B cell (primary cell): ENCODE measurements at regions of chr9 and their contacts with region 1.

Region 1: DNA sequence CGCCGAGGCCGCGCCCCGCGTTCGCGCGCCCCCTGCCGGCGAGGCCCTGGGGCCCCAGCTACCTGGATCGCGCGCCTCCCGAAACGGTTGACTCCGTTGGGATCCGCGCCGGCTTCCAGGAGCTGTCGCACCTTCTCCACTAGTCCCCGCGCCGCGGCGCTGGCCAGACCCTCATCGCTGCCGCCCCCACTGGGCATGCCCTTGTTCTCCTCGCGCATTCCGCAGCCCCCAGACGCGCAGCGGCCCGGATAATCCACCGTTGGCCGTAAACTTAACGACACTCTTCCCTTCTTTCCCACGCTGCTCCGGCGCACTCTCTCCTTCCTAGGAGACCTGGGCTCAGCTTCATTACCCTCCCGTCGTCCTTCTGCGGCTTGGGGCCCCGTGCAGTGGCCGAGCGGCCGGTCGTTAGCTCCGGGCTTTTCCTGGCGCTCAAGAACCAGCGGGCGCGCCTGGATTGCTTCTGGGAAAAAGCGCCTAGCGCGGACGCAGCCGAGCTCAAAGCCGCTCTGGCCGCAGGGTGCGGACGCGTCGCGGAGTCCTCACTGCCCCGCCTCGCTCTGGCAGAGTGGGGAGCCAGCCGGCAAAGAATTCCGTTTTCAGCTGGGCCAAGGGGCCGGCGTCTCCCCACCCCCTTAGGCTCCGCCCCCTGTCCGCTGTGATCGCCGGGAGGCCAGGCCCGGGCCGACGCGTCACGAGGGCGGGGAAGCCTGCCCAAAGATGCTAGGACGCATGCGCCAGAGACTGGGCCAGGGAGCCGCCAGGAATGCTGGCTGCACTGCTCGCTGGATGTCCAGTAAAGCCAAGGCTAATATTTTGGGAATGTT is at the start of gene CDKN2B:
- DNase-seq: peak; percentile 83
- ATAC-seq: peak; percentile 89
- H3K4me3 ChIP-seq: peak within 1 kb of the TSS; percentile 34 to 78 (median 69)
- H3K4me3 Mint-ChIP-seq: peak within 1 kb of the TSS; percentile 86
- H3K27ac ChIP-seq: peak within 1 kb of the TSS in 1 of 2 donors; percentile 9
- H3K27ac Mint-ChIP-seq: peak within 1 kb of the TSS; percentile 41
- H3K4me1 ChIP-seq: peaks cover 30 to 41% of the 10 kb centered on the region in 2 donors
- H3K4me1 Mint-ChIP-seq: peaks cover 34% of the 10 kb centered on the region
- H3K27me3 ChIP-seq: peaks cover 0 to 53% (median 45%) of the 10 kb centered on the region in 4 experiments
- H3K27me3 Mint-ChIP-seq: peaks cover 36% of the 10 kb centered on the region
- CTCF ChIP-seq: peak; percentile 98
- total RNA-seq, gene CDKN2B: 0.42 and 1.3 TPM in 2 replicates

Region 2: DNA sequence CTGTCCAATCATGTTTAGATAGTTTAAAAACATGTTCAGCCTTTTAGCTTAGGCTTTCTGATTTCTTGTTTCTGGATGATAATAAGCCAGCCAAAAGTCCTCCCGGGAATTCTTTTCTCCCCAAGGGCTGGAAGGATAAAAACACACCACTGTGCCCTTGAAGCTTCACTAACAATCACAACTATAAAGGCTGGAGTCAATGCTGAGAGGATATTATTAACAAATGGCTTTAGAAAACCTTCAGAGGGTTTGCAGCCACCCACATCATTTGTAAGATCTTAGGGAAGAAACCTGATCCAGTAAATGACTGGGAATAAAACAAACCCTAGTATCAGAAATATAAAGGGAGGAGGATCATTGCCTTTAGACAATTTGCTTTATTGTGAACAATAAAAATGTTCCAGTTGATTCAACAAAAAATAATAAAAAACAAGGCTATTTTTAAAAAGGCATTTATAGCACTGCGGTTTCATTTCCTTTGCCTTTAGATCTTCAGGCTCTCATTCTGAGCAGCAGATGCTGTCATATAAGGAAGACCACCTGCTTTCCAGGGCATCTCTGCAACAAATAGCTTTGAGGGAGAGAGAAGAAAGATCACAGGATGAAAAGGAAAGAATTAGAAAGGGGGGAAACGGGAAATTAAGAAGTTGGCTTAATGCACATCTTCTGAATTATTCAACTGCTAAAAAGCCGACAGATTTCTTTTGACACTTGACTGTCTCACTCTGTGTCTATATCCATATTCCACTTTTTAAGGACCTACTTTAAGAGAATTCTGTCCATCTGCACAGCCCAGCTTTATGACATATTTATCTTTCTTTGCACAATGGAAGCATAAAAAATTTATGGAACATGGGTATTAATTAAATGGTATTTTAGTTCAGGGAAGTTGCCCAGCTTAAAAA is 1942.9 kb before region 1 on chr9:
- CTCF ChIA-PET with region 1: no interaction called
- POLR2A ChIA-PET with region 1: no interaction called
- intact Hi-C with region 1: no loop called
- DNase-seq: no peak
- ATAC-seq: no peak
- H3K4me3 ChIP-seq: peak overlapping the region in 2 of 5 experiments; percentile 1 to 25
- H3K4me3 Mint-ChIP-seq: peak overlapping the region; percentile 48
- H3K27ac ChIP-seq: peak overlapping the region; percentile 63 to 85
- H3K27ac Mint-ChIP-seq: peak overlapping the region; percentile 85
- H3K4me1 ChIP-seq: peaks cover 28 to 30% of the 10 kb centered on the region in 2 donors
- H3K4me1 Mint-ChIP-seq: peaks cover 44% of the 10 kb centered on the region
- H3K27me3 ChIP-seq: no peaks in the 10 kb centered on the region
- H3K27me3 Mint-ChIP-seq: peaks cover 2% of the 10 kb centered on the region
- CTCF ChIP-seq: no peak

Region 3: GRCh38 chr9:21728781-21729180 is 280.2 kb before region 1 on chr9:
- CTCF ChIA-PET with region 1: no interaction called
- POLR2A ChIA-PET with region 1: no interaction called
- intact Hi-C with region 1: no loop called
- DNase-seq: no peak
- ATAC-seq: no peak
- H3K4me3 ChIP-seq: no peak overlapping the region
- H3K4me3 Mint-ChIP-seq: no peak overlapping the region
- H3K27ac ChIP-seq: no peak overlapping the region
- H3K27ac Mint-ChIP-seq: no peak overlapping the region
- H3K4me1 ChIP-seq: no peaks in the 10 kb centered on the region
- H3K4me1 Mint-ChIP-seq: no peaks in the 10 kb centered on the region
- H3K27me3 ChIP-seq: peaks cover 0 to 4% (median 1%) of the 10 kb centered on the region in 4 experiments
- H3K27me3 Mint-ChIP-seq: peaks cover 17% of the 10 kb centered on the region
- CTCF ChIP-seq: no peak

Region 4: DNA sequence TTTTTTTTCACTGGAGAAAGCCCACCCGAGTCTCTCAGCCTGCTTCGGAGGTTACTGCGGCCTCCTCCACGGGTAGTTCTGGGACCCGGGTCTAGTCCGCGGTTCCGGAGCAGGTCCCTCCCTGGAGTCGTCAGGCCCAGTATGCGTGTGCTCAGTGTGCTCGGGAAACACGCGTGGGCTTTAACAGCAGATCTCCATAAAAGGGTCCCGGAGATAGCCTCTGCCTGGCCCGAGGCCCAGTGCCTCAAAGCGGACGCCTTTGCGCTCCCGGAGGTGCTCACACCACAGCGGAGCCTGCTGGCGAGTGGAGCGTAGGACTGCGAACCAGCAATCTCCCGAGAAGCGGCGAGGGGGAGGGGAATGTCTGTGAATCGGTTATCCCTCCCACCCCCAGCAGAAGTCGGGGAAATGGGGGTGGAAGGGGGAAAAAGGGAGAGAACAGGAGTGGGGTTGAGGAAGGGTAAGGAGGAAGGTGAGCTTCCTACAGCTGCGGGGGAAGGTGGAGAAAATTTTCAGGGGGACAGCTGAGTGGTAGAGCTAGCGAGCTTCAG is 43.5 kb before region 1 on chr9:
- CTCF ChIA-PET with region 1: interaction called, 43 read pairs
- POLR2A ChIA-PET with region 1: no interaction called
- intact Hi-C with region 1: no loop called
- DNase-seq: peak; percentile 72
- ATAC-seq: peak; percentile 65
- H3K4me3 ChIP-seq: peak overlapping the region in 4 of 5 experiments; percentile 14 to 49 (median 27)
- H3K4me3 Mint-ChIP-seq: peak overlapping the region; percentile 76
- H3K27ac ChIP-seq: no peak overlapping the region
- H3K27ac Mint-ChIP-seq: no peak overlapping the region
- H3K4me1 ChIP-seq: peaks cover 17 to 34% of the 10 kb centered on the region in 2 donors
- H3K4me1 Mint-ChIP-seq: peaks cover 21% of the 10 kb centered on the region
- H3K27me3 ChIP-seq: peaks cover 0 to 83% (median 77%) of the 10 kb centered on the region in 4 experiments
- H3K27me3 Mint-ChIP-seq: peaks cover 89% of the 10 kb centered on the region
- CTCF ChIP-seq: peak; percentile 24

Region 5: GRCh38 chr9:21985964-21986667 is 22.8 kb before region 1 on chr9:
- CTCF ChIA-PET with region 1: interaction called, 25 read pairs
- POLR2A ChIA-PET with region 1: no interaction called
- intact Hi-C with region 1: loop called (anchors 2 kb)
- DNase-seq: no peak
- ATAC-seq: no peak
- H3K4me3 ChIP-seq: no peak overlapping the region
- H3K4me3 Mint-ChIP-seq: no peak overlapping the region
- H3K27ac ChIP-seq: no peak overlapping the region
- H3K27ac Mint-ChIP-seq: no peak overlapping the region
- H3K4me1 ChIP-seq: peaks cover 0 to 16% of the 10 kb centered on the region in 2 donors
- H3K4me1 Mint-ChIP-seq: peaks cover 9% of the 10 kb centered on the region
- H3K27me3 ChIP-seq: peaks cover 3 to 66% (median 25%) of the 10 kb centered on the region in 4 experiments
- H3K27me3 Mint-ChIP-seq: peaks cover 52% of the 10 kb centered on the region
- CTCF ChIP-seq: no peak

Region 6: DNA sequence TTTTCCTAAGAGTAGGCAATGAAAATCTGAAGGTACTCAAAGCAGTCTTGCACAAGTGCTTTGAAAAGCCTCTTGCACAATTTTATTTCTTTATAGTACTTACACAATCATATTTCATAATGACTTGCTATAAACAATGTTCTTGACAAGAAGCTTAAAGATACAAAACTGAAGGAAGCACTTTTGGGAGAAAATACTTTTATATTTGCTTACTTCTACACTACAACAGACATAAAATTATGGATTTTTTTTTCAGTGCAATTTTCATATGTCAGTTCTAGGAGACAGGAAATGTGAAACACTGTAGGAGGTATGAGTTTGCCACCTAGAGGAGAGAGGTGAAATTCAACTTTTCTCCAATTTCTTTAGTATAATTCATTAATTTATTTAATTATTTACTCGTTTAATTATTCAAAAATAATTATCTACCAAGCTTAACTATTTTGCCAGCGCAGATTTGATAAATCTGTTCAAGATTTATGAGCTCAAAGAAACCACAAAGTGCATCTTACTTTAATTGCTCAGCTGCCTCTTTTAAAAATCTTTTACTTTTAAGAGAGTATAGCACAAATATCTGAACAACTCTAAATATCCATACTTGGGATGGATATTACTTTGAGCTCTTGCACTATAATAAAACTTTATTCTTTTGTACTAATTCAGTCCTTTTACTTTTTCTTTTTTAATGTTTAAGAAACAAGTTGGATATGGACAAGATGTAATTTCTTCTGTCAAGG is 29.2 kb after region 1 on chr9:
- CTCF ChIA-PET with region 1: interaction called, 45 read pairs
- POLR2A ChIA-PET with region 1: no interaction called
- intact Hi-C with region 1: no loop called
- DNase-seq: peak; percentile 25
- ATAC-seq: no peak
- H3K4me3 ChIP-seq: no peak overlapping the region
- H3K4me3 Mint-ChIP-seq: no peak overlapping the region
- H3K27ac ChIP-seq: no peak overlapping the region
- H3K27ac Mint-ChIP-seq: no peak overlapping the region
- H3K4me1 ChIP-seq: no peaks in the 10 kb centered on the region
- H3K4me1 Mint-ChIP-seq: no peaks in the 10 kb centered on the region
- H3K27me3 ChIP-seq: no peaks in the 10 kb centered on the region
- H3K27me3 Mint-ChIP-seq: no peaks in the 10 kb centered on the region
- CTCF ChIP-seq: peak; percentile 77

Region 7: DNA sequence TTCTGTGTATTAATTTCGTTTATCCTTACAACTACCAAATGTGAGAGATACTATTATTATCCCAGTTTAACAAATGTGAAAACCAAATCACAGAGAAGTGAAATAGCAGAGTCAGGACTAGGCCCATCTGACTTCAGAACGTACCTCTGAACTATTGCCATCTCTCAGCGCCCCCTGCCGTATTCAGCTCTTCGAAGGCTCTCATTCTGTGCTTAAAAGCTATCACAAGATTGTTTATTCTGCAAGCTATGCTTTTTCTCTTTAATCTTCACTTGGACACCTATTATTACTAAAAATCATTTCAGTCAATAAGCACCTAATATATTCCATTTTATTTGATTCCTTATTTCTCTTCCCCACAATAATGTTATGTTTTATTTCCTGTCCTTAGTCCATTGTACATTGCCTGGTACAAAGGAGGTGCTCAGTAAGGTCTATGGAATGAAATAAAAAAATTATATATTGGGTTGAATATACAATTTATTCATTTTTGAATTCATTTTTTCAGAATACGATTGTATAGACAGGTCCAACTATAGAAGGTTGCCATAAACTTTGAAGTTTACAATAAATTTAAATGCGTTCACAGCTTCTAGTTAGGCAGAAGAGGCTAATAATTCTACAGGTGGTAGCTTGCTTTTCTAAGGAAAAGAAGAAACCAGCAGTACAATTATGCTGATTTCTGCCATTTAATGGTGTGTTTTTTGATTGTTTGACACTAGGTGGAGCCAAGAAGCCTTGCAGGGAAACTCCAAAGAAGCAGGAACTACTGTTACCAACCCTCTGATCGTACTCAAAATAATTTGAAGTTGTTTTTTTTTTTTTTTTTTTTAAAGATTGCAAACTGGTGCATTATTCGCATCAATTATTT is 235.4 kb after region 1 on chr9:
- CTCF ChIA-PET with region 1: interaction called, 56 read pairs
- POLR2A ChIA-PET with region 1: no interaction called
- intact Hi-C with region 1: loop called (anchors 1 kb)
- DNase-seq: peak; percentile 67
- ATAC-seq: peak; percentile 56
- H3K4me3 ChIP-seq: peak overlapping the region in 2 of 5 experiments; percentile 7 to 30
- H3K4me3 Mint-ChIP-seq: peak overlapping the region; percentile 35
- H3K27ac ChIP-seq: no peak overlapping the region
- H3K27ac Mint-ChIP-seq: no peak overlapping the region
- H3K4me1 ChIP-seq: peaks cover 28 to 29% of the 10 kb centered on the region in 2 donors
- H3K4me1 Mint-ChIP-seq: peaks cover 36% of the 10 kb centered on the region
- H3K27me3 ChIP-seq: no peaks in the 10 kb centered on the region
- H3K27me3 Mint-ChIP-seq: peaks cover 13% of the 10 kb centered on the region
- CTCF ChIP-seq: peak; percentile 79